Activated naive CD4-positive, alpha-beta T cell treated with anti-CD3 and anti-CD28 coated beads for 36 hours (primary cell): ENCODE measurements at regions of chr5 and their contacts with region 1.

Region 1: GRCh38 chr5:143898916-143899591 is 87.1 kb downstream of the HMHB1 start:
- DNase-seq: no peak
- H3K4me3 Mint-ChIP-seq: no peak overlapping the region
- H3K27ac Mint-ChIP-seq: peak overlapping the region; percentile 42
- H3K4me1 Mint-ChIP-seq: peaks cover 32% of the 10 kb centered on the region
- H3K27me3 Mint-ChIP-seq: no peaks in the 10 kb centered on the region

Region 2: GRCh38 chr5:143923634-143924255 is 24.7 kb after region 1 on chr5:
- CTCF ChIA-PET with region 1: no interaction called
- intact Hi-C with region 1: loop called (anchors 1 kb)
- DNase-seq: no peak
- H3K4me3 Mint-ChIP-seq: no peak overlapping the region
- H3K27ac Mint-ChIP-seq: no peak overlapping the region
- H3K4me1 Mint-ChIP-seq: peaks cover 10% of the 10 kb centered on the region
- H3K27me3 Mint-ChIP-seq: peaks cover 2% of the 10 kb centered on the region